ENCODE measurements at regions of chr10 and their contacts with region 1.

Region 1: DNA sequence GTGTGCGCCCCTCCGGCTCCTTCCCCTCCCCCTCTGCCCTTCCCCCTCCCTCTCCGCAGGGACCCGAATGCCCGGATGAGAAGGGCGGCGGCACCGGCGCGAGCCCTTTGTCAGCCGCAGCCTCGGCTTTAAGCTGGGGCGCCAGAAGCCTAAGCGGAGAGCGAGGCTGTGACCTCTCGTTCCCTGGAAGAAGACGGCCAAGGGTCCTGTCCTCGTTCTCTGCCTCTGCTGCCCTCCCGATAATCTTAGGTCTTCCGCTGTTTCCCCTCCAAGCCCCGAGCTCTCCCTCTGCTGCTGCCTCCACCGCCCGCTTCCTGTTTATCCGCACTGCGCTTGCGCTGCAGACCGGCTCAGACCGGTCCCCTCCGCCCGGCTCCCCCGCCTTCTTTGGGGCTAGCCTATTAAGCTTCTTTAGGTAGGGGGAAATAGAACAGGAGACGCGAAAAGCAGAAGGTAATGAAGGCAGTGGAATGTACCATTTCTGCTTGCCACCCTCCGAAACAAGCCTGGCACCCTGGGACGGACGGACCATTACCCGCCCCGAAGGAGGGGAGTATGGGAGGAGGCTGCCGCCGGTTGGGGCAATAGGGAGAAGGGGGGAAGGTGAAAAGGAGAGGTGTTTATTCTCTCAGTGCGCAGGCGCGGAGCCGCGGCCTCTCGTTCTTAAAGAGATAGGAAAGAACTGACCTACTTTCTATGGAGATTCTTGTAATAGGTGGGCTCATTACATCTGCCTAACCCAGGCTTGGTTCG is at the start of gene OGA:
- DNase-seq: peak; percentile 97
- H3K4me3 Mint-ChIP-seq: peak within 1 kb of the TSS; percentile 90
- H3K27ac Mint-ChIP-seq: peak within 1 kb of the TSS; percentile 95
- H3K4me1 Mint-ChIP-seq: peaks cover 40% of the 10 kb centered on the region
- H3K27me3 Mint-ChIP-seq: no peaks in the 10 kb centered on the region
- total RNA-seq, gene OGA: 119 and 122 TPM in 2 replicates

Region 2: GRCh38 chr10:101797403-101798059 is 20.8 kb before region 1 on chr10:
- intact Hi-C with region 1: no loop called
- DNase-seq: no peak
- H3K4me3 Mint-ChIP-seq: no peak overlapping the region
- H3K27ac Mint-ChIP-seq: no peak overlapping the region
- H3K4me1 Mint-ChIP-seq: peaks cover 4% of the 10 kb centered on the region
- H3K27me3 Mint-ChIP-seq: no peaks in the 10 kb centered on the region

Region 3: GRCh38 chr10:101830322-101831168 is 12.2 kb after region 1 on chr10:
- intact Hi-C with region 1: loop called (anchors 1 kb)
- DNase-seq: peak; percentile 88
- H3K4me3 Mint-ChIP-seq: peak overlapping the region; percentile 71
- H3K27ac Mint-ChIP-seq: peak overlapping the region; percentile 92
- H3K4me1 Mint-ChIP-seq: peaks cover 48% of the 10 kb centered on the region
- H3K27me3 Mint-ChIP-seq: no peaks in the 10 kb centered on the region

Region 4: GRCh38 chr10:101961591-101962498 is 143.6 kb after region 1 on chr10:
- intact Hi-C with region 1: no loop called
- DNase-seq: no peak
- H3K4me3 Mint-ChIP-seq: no peak overlapping the region
- H3K27ac Mint-ChIP-seq: no peak overlapping the region
- H3K4me1 Mint-ChIP-seq: peaks cover 1% of the 10 kb centered on the region
- H3K27me3 Mint-ChIP-seq: no peaks in the 10 kb centered on the region

Region 5: DNA sequence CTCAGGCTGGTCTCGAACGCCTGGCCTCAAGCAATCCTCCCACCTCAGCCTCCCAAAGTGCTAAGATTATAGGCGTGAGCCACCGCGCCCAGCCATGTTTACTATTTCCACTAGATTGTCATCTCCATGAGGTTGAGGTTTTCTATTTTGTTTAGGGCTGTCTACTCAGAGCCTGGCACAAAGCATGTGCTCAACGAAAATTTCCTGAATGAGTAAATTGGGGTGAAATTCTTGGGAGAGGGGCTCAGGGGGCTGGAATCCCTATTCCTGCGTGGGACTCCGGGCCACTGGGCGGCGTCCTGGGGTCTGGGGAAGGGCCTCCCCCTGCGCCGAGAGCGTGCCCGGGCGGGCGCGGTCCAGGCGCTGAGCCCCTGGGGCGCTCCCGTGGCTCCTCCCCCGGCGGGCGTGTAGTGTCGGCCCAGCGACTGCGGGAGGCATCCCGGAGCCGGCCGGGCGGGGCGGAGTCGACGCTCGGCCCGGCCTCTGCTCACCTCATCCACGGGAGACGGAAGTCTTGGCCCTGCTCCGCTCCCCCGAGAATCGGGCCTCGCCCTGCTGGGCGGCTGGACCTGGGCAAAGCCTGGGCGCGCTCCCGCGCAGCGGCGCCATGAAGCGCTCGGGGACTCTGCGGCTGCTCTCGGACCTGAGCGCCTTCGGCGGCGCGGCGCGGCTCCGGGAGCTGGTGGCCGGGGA is 246.7 kb after region 1 on chr10 and contains the start of gene HPS6:
- intact Hi-C with region 1: loop called (anchors 5 kb)
- DNase-seq: peak; percentile 88
- H3K4me3 Mint-ChIP-seq: peak within 1 kb of the TSS; percentile 86
- H3K27ac Mint-ChIP-seq: peak within 1 kb of the TSS; percentile 89
- H3K4me1 Mint-ChIP-seq: peaks cover 21% of the 10 kb centered on the region
- H3K27me3 Mint-ChIP-seq: no peaks in the 10 kb centered on the region
- total RNA-seq, gene HPS6: 25.4 and 25.5 TPM in 2 replicates